ENCODE measurements at regions of chr1 and their contacts with region 1.

Region 1: DNA sequence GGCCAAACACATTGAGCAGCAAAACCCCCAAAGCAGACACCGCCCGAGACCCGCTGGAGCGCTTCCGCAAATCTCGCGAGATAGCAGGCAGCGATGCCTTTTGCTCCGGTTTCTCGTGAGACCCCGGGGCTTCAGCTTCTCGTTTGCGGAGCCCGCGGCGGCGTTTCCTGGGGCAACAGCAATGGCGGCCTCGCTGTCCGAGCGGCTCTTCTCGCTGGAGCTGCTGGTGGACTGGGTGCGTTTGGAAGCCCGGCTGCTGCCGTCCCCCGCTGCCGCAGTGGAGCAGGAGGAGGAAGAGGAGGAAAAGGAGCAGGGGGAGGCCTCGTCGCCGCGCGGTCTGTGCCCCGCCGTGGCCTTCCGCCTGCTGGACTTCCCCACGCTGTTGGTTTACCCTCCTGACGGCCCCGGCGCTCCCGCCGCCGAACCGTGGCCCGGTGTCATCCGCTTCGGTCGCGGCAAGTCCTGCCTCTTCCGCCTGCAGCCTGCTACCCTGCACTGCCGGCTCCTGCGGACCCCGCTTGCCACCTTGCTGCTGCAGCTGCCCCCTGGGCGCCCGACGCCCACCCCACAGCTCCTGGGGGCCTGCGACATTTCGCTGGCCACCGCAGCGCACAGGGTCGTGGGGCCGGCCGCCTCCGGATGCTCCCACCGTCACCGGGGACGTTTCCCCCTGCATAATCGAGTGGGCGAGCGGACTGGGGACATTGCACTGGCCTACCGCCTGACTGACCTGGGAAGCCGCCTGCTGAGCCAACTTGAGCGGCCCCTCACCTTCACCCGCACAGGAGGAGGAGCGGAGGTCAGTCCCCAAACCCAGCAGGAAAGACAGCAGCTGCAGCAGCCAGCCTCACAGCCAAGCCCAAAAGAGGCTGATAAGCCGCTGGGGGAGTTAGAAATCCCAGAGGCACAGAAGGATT is at the start of gene MAP10:
- DNase-seq: peak; percentile 28 to 66
- ATAC-seq: peak; percentile 84 to 86
- H3K4me3 ChIP-seq: peak within 1 kb of the TSS; percentile 75 to 85 (median 76)
- H3K27ac ChIP-seq: peak within 1 kb of the TSS; percentile 78 to 83 (median 82)
- H3K4me1 ChIP-seq: peaks cover 28 to 54% of the 10 kb centered on the region in 2 donors
- H3K27me3 ChIP-seq: no peaks in the 10 kb centered on the region
- CTCF ChIP-seq: no peak
- POLR2A ChIP-seq: peak; percentile 23 to 34
- total RNA-seq, gene MAP10: 1.9 to 2.6 (median 2.3) TPM

Region 2: DNA sequence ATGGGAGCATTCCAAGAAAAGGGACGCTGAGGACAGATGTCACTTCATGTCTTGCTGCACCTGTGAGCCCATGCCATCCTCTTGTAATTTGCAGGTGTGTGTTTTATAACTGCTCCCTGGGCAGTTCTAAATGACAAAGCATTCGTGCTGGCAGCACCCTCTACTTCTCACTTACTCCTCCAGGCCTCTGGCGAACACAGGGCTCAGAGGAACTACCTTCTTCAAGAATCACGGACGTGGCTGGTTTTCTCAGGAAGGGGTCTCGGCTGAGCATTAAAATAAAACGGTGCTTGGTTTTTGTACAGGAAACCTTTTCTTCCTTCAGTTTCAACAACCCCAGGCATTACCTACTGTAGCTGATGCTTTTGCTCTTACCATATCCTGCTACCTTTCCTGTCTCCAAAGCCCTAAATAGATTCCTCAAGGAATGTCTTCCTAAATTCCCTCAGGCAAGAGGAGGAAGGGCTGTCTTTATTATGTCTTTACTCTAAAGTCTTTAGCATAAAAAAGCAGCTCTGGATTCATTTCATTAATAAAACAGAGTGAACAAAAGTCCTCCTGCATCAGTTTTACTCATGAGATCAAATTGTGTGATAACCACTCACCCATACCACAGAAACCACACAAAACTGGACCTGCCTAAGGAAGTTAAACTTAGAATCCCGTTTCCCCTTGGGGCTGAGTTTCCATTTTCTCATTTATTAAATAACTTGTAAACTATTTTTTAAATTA is 79.3 kb before region 1 on chr1:
- in situ Hi-C with region 1: no loop called
- intact Hi-C with region 1: no loop called
- DNase-seq: no peak
- ATAC-seq: no peak
- H3K4me3 ChIP-seq: no peak overlapping the region
- H3K27ac ChIP-seq: no peak overlapping the region
- H3K4me1 ChIP-seq: no peaks in the 10 kb centered on the region
- H3K27me3 ChIP-seq: no peaks in the 10 kb centered on the region
- CTCF ChIP-seq: no peak
- POLR2A ChIP-seq: no peak

Region 3: DNA sequence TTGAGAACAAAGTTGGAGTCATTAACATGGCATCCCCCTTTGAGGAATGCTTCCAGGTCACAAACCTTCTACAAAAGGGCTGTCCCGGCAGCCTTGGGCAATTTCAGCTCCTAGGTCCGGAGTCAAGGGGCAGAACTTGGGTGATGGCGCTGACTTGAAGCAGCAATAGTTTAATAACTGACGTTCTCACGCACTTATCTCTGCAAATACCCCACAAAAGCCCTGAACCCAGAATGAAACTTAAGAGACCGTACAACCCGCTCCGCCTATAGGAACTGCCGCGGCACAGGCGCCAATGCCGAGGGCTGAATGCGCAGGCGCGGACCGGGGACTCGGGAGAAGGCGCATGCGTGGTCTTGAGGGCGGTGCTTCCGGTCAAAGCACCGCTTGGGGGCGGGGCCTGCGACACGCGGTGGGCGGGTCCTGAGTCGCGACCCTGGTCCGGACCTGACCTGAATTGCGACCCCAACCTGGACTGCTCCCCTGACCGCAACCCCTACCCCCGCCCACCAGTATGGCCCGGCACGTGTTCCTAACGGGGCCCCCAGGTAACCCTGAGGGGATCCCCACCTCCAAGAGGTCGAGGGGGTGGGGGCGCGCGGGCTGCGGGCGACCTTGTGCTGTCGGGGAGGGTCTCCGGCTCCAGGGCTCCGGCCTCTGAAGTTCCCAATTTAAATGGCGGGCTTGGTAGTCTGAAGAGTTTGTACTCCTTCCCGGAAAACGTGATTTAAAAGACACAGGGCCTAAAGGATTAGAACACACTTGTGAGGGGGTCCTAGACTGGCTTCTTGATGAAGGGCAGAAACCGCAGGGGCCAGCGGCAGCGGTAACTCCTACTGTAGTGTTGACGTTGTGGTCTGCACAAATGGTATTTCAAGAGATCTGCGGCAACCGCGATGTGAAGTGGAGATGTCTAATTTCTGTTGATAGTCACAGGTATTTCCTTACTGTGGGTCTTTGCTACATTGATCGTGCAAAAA is 145.0 kb after region 1 on chr1 and contains the start of gene NTPCR:
- in situ Hi-C with region 1: no loop called
- intact Hi-C with region 1: loop called (anchors 5 kb)
- DNase-seq: peak; percentile 88 to 90
- ATAC-seq: peak; percentile 92 to 95
- H3K4me3 ChIP-seq: peak within 1 kb of the TSS; percentile 77 to 94 (median 88)
- H3K27ac ChIP-seq: peak within 1 kb of the TSS; percentile 88 to 96 (median 92)
- H3K4me1 ChIP-seq: peaks cover 19 to 27% of the 10 kb centered on the region in 2 donors
- H3K27me3 ChIP-seq: no peaks in the 10 kb centered on the region
- CTCF ChIP-seq: peak in 3 of 5 experiments; percentile 6 to 39 (median 16)
- POLR2A ChIP-seq: peak; percentile 37 to 40
- total RNA-seq, gene NTPCR: 20.5 to 33.7 (median 24.2) TPM